Naive thymus-derived CD4-positive, alpha-beta T cell (primary cell): ENCODE measurements at regions of chr16 and their contacts with region 1.

Region 1: GRCh38 chr16:3150346-3151218 is 15.8 kb downstream of the ZNF213 start:
- DNase-seq: peak; percentile 90 to 100 (median 97)
- ATAC-seq: peak; percentile 90
- H3K4me3 ChIP-seq: peak overlapping the region; percentile 73
- H3K4me3 Mint-ChIP-seq: peak overlapping the region; percentile 83 to 93 (median 90)
- H3K27ac ChIP-seq: peak overlapping the region; percentile 71
- H3K27ac Mint-ChIP-seq: peak overlapping the region; percentile 85 to 98 (median 94)
- H3K4me1 ChIP-seq: peaks cover 0 to 5% of the 10 kb centered on the region in 2 donors
- H3K4me1 Mint-ChIP-seq: peaks cover 11 to 42% (median 22%) of the 10 kb centered on the region in 7 donors
- H3K27me3 ChIP-seq: no peaks in the 10 kb centered on the region
- H3K27me3 Mint-ChIP-seq: peaks cover 0 to 25% (median 0%) of the 10 kb centered on the region in 5 donors

Region 2: DNA sequence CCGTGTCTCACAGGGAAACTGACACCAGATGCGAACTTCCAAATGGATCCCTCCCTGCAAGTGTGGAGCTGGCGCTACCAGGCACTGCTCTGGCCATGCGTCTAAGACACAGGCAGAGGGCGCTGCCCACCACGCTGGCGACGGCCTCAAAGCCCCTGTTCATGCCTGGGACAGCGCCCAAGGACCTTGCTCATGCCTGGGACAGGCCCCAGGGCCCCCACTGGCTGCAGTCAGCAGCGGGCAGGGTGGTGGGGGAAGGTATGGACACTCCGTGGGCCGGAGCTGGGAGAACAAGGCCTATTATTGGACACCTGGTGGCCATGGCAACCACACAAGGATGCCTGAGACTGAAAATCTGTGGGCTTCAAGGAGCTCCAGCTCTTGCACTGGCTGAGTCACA is 311.7 kb before region 1 on chr16:
- CTCF ChIA-PET with region 1: no interaction called
- POLR2A ChIA-PET with region 1: no interaction called
- intact Hi-C with region 1: no loop called
- DNase-seq: peak; percentile 33 to 57 (median 48)
- ATAC-seq: peak; percentile 79
- H3K4me3 ChIP-seq: no peak overlapping the region
- H3K4me3 Mint-ChIP-seq: peak overlapping the region in 1 of 10 donors; percentile 14
- H3K27ac ChIP-seq: no peak overlapping the region
- H3K27ac Mint-ChIP-seq: peak overlapping the region in 7 of 9 donors; percentile 18 to 66 (median 47)
- H3K4me1 ChIP-seq: peaks cover 30 to 33% of the 10 kb centered on the region in 2 donors
- H3K4me1 Mint-ChIP-seq: peaks cover 13 to 45% (median 24%) of the 10 kb centered on the region in 7 donors
- H3K27me3 ChIP-seq: no peaks in the 10 kb centered on the region
- H3K27me3 Mint-ChIP-seq: peaks cover 0 to 6% (median 0%) of the 10 kb centered on the region in 5 donors

Region 3: GRCh38 chr16:3099732-3100499 is 50.7 kb before region 1 on chr16:
- CTCF ChIA-PET with region 1: interaction called, 5 read pairs
- POLR2A ChIA-PET with region 1: interaction called, 3 read pairs
- intact Hi-C with region 1: loop called in 1 of 2 experiments (anchors 2 kb)
- DNase-seq: peak; percentile 67 to 94 (median 75)
- ATAC-seq: peak; percentile 94
- H3K4me3 ChIP-seq: peak overlapping the region; percentile 46
- H3K4me3 Mint-ChIP-seq: peak overlapping the region; percentile 71 to 98 (median 82)
- H3K27ac ChIP-seq: peak overlapping the region; percentile 35
- H3K27ac Mint-ChIP-seq: peak overlapping the region; percentile 74 to 93 (median 86)
- H3K4me1 ChIP-seq: peaks cover 25 to 31% of the 10 kb centered on the region in 2 donors
- H3K4me1 Mint-ChIP-seq: peaks cover 27 to 65% (median 54%) of the 10 kb centered on the region in 7 donors
- H3K27me3 ChIP-seq: no peaks in the 10 kb centered on the region
- H3K27me3 Mint-ChIP-seq: no peaks in the 10 kb centered on the region

Region 4: GRCh38 chr16:3165111-3165822 is 14.7 kb after region 1 on chr16:
- CTCF ChIA-PET with region 1: no interaction called
- POLR2A ChIA-PET with region 1: interaction called, 30 read pairs
- intact Hi-C with region 1: loop called in 1 of 2 experiments (anchors 1 kb)
- DNase-seq: no peak
- ATAC-seq: no peak
- H3K4me3 ChIP-seq: no peak overlapping the region
- H3K4me3 Mint-ChIP-seq: peak overlapping the region; percentile 39 to 80 (median 58)
- H3K27ac ChIP-seq: peak overlapping the region; percentile 55
- H3K27ac Mint-ChIP-seq: peak overlapping the region; percentile 36 to 93 (median 71)
- H3K4me1 ChIP-seq: peaks cover under 1 to 4% of the 10 kb centered on the region in 2 donors
- H3K4me1 Mint-ChIP-seq: peaks cover 9 to 24% (median 10%) of the 10 kb centered on the region in 7 donors
- H3K27me3 ChIP-seq: no peaks in the 10 kb centered on the region
- H3K27me3 Mint-ChIP-seq: peaks cover 0 to 27% (median 0%) of the 10 kb centered on the region in 5 donors

Region 5: GRCh38 chr16:3214904-3215600 is 64.5 kb after region 1 on chr16:
- CTCF ChIA-PET with region 1: no interaction called
- POLR2A ChIA-PET with region 1: interaction called, 3 read pairs
- intact Hi-C with region 1: loop called in 1 of 2 experiments (anchors 5 kb)
- DNase-seq: peak in 7 of 9 donors; percentile 75 to 91 (median 87)
- ATAC-seq: peak; percentile 95
- H3K4me3 ChIP-seq: peak overlapping the region; percentile 38
- H3K4me3 Mint-ChIP-seq: peak overlapping the region; percentile 69 to 88 (median 76)
- H3K27ac ChIP-seq: peak overlapping the region; percentile 75
- H3K27ac Mint-ChIP-seq: peak overlapping the region; percentile 96 to 100 (median 99)
- H3K4me1 ChIP-seq: peaks cover 24 to 30% of the 10 kb centered on the region in 2 donors
- H3K4me1 Mint-ChIP-seq: peaks cover 30 to 51% (median 39%) of the 10 kb centered on the region in 7 donors
- H3K27me3 ChIP-seq: no peaks in the 10 kb centered on the region
- H3K27me3 Mint-ChIP-seq: no peaks in the 10 kb centered on the region

Region 6: GRCh38 chr16:3321802-3322201 is 171.2 kb after region 1 on chr16:
- CTCF ChIA-PET with region 1: no interaction called
- POLR2A ChIA-PET with region 1: no interaction called
- intact Hi-C with region 1: no loop called
- DNase-seq: no peak
- ATAC-seq: no peak
- H3K4me3 ChIP-seq: no peak overlapping the region
- H3K4me3 Mint-ChIP-seq: no peak overlapping the region
- H3K27ac ChIP-seq: no peak overlapping the region
- H3K27ac Mint-ChIP-seq: no peak overlapping the region
- H3K4me1 ChIP-seq: no peaks in the 10 kb centered on the region
- H3K4me1 Mint-ChIP-seq: no peaks in the 10 kb centered on the region
- H3K27me3 ChIP-seq: no peaks in the 10 kb centered on the region
- H3K27me3 Mint-ChIP-seq: no peaks in the 10 kb centered on the region

Region 7: GRCh38 chr16:3578610-3579551 is 428.3 kb after region 1 on chr16:
- CTCF ChIA-PET with region 1: no interaction called
- POLR2A ChIA-PET with region 1: no interaction called
- intact Hi-C with region 1: loop called in 1 of 2 experiments (anchors 10 kb)
- DNase-seq: peak in 5 of 9 donors; percentile 15 to 70 (median 29)
- ATAC-seq: peak; percentile 64
- H3K4me3 ChIP-seq: peak overlapping the region; percentile 39
- H3K4me3 Mint-ChIP-seq: peak overlapping the region; percentile 82 to 100 (median 98)
- H3K27ac ChIP-seq: peak overlapping the region; percentile 90
- H3K27ac Mint-ChIP-seq: peak overlapping the region; percentile 83 to 97 (median 95)
- H3K4me1 ChIP-seq: peaks cover 27 to 36% of the 10 kb centered on the region in 2 donors
- H3K4me1 Mint-ChIP-seq: peaks cover 19 to 59% (median 47%) of the 10 kb centered on the region in 7 donors
- H3K27me3 ChIP-seq: no peaks in the 10 kb centered on the region
- H3K27me3 Mint-ChIP-seq: no peaks in the 10 kb centered on the region